ENCODE measurements at regions of chr2 and their contacts with region 1.

Region 1: DNA sequence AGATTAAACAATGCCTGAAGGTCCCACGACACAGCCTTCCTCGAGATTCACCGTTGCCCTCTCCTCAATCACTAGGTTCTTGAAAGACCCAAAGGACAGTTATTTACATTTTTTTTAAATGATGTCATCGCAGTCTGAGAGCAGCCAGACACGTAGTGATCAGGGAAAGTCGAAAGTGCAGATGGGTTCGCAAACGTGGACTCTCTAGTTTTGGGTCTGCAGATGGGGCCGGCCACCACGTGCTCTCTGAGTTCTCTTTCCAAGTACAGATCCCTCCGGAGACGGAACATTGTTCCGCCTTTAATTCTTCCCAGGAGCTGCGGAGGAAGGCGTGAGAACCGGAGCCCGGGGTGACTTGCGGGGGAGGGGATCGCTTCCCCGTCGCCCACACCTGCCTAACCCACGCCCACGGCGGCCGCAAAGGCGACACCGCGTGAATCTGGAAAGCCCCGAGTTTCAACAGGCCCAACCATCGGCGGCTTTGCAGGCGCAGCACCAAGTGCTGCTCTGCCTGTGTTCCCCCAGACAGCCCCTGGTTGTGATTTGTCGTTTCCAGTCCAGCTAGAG is 54.3 kb downstream of the PKDCC start:
- DNase-seq: peak; percentile 87 to 97 (median 94)
- ATAC-seq: peak; percentile 85
- H3K4me3 ChIP-seq: peak overlapping the region; percentile 44
- H3K4me3 Mint-ChIP-seq: peak overlapping the region in 8 of 10 donors; percentile 76 to 91 (median 85)
- H3K27ac ChIP-seq: peak overlapping the region; percentile 95
- H3K27ac Mint-ChIP-seq: peak overlapping the region in 2 of 9 donors; percentile 97 to 99
- H3K4me1 ChIP-seq: peaks cover 74 to 81% of the 10 kb centered on the region in 2 donors
- H3K4me1 Mint-ChIP-seq: peaks cover 37 to 69% (median 50%) of the 10 kb centered on the region in 7 donors
- H3K27me3 ChIP-seq: no peaks in the 10 kb centered on the region
- H3K27me3 Mint-ChIP-seq: no peaks in the 10 kb centered on the region

Region 2: DNA sequence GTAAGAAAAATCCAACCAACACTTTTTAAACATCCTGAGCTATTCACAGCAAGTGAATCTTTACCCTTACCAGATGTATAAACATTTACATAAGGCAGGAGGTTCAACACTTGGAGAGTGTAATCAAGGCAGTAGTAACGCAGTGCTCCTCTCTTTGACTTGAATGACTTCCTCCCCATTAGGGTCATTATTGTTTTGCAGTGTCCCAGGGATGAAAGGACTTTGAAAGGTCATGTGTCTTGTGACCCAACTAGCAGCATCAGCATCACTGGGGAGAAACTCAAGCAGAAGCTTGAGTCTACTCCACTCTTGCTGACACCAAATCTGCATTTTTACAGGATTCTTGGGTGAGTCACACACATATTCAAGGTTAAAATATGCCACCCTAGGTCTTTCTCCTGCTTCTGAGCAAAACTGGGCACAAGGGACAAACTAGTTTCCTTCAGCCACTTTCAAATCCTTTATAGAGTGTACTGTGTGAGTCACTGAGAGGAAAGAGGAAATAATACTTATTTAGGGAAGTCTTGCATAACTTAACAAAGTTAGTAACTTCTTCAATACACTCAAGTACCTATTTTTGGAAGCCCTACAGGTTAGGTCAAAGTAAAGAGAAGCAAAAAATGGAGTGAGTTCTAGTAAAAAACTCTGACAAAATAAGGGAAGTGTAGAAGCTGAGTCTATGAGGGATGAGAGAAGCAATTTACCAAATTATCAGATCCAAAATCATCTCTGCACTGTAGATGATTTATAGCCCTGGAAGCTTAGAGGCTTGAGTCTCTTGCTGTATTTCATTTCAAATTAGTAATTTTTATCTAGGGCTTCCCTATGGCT is 16.0 kb after region 1 on chr2:
- CTCF ChIA-PET with region 1: interaction called, 17 read pairs
- POLR2A ChIA-PET with region 1: interaction called, 636 read pairs
- intact Hi-C with region 1: loop called in 1 of 2 experiments (anchors 1 kb)
- DNase-seq: no peak
- ATAC-seq: peak; percentile 94
- H3K4me3 ChIP-seq: no peak overlapping the region
- H3K4me3 Mint-ChIP-seq: peak overlapping the region in 4 of 10 donors; percentile 15 to 60 (median 50)
- H3K27ac ChIP-seq: no peak overlapping the region
- H3K27ac Mint-ChIP-seq: peak overlapping the region; percentile 38 to 90 (median 64)
- H3K4me1 ChIP-seq: peaks cover 26 to 31% of the 10 kb centered on the region in 2 donors
- H3K4me1 Mint-ChIP-seq: peaks cover 30 to 72% (median 57%) of the 10 kb centered on the region in 7 donors
- H3K27me3 ChIP-seq: no peaks in the 10 kb centered on the region
- H3K27me3 Mint-ChIP-seq: peaks cover 0 to 2% (median 0%) of the 10 kb centered on the region in 5 donors

Region 3: DNA sequence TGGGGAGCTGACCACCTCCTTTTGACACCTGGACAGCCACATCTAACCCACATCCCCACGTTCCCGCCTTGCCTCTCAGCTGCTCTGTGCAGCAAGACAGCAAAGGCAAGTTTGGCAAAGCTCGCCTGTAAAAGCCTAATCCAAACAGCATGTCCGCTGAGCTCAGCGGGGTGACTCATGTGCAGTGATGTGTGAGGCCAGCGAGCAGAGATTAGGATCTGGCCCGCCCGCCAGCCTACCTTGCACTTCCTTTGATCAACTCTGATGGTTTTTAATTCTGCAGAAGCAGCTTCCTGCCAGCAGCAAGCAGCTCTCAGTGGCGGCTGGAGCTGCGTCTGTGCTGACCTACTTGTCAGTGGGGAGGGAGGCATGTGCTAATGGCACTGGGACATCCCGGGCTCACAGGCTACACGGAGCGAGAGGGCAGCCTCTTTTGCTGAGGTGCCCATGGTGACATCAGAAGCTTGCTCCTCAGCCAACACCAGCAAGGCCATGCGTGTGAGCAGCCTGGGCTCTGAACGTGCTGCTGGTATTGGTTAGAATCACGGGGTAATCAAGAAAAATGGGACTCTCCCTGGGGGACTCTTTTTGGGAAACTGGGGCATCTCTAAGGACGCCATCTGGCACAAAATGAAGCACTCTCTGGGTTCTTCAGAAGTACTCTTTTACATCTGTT is 31.0 kb after region 1 on chr2:
- CTCF ChIA-PET with region 1: interaction called, 19 read pairs
- POLR2A ChIA-PET with region 1: interaction called, 636 read pairs
- intact Hi-C with region 1: loop called (anchors 1 kb)
- DNase-seq: peak; percentile 53 to 92 (median 78)
- ATAC-seq: peak; percentile 94
- H3K4me3 ChIP-seq: peak overlapping the region; percentile 38
- H3K4me3 Mint-ChIP-seq: peak overlapping the region; percentile 66 to 86 (median 76)
- H3K27ac ChIP-seq: peak overlapping the region; percentile 82
- H3K27ac Mint-ChIP-seq: peak overlapping the region; percentile 68 to 98 (median 96)
- H3K4me1 ChIP-seq: peaks cover 81 to 89% of the 10 kb centered on the region in 2 donors
- H3K4me1 Mint-ChIP-seq: peaks cover 57 to 95% (median 93%) of the 10 kb centered on the region in 7 donors
- H3K27me3 ChIP-seq: no peaks in the 10 kb centered on the region
- H3K27me3 Mint-ChIP-seq: no peaks in the 10 kb centered on the region

Region 4: DNA sequence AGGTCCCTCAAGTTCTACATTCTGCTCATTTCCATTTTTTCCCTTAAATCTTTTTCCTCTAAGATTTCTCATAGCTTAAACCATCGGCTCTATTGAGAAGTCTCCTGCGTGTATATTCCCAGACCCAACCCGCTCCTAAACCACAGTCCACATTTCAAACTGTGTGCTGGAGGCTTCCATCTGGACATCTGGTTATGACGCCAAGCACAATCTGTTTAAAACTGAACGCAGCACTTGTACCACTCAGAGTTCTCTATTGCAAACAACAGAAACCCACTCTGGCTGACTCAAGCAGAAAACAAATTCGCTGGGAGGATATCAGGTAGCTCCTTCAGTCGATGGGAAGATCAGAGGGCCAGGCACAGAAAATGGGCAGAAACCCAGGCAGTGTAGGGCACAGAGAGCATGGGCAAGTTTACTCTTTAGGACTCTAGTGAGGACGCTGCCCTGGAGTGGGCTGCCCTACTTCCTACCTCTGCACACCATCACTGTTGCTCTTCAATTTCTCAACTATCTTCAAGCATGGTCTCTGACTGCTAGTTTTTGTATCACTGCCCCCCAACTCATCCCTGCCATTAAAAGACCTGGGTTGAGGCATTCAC is 61.4 kb after region 1 on chr2:
- CTCF ChIA-PET with region 1: interaction called, 4 read pairs
- POLR2A ChIA-PET with region 1: interaction called, 187 read pairs
- intact Hi-C with region 1: no loop called
- DNase-seq: no peak
- ATAC-seq: no peak
- H3K4me3 ChIP-seq: no peak overlapping the region
- H3K4me3 Mint-ChIP-seq: no peak overlapping the region
- H3K27ac ChIP-seq: no peak overlapping the region
- H3K27ac Mint-ChIP-seq: peak overlapping the region in 1 of 9 donors; percentile 73
- H3K4me1 ChIP-seq: no peaks in the 10 kb centered on the region
- H3K4me1 Mint-ChIP-seq: peaks cover 0 to 21% (median 5%) of the 10 kb centered on the region in 7 donors
- H3K27me3 ChIP-seq: no peaks in the 10 kb centered on the region
- H3K27me3 Mint-ChIP-seq: peaks cover 0 to 33% (median 0%) of the 10 kb centered on the region in 5 donors

Region 5: DNA sequence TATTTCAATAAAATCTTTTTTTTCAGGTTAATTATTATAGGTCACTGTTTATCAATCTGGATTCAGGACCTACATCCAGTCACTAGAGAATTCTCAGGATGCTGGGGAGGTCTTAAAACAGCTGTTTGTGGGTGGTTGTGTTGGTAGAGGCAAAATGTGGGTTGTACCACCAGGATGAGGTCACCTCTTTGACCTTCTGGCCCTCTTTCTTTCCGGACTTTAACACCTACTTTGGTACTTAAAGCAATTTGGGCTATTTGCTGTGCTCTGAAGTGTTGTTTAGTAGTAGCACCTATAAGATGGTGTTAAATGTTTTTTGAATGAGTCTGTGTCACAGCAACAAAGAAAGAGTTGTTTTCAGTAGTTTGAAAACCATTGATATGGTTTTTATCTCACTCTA is 81.7 kb after region 1 on chr2:
- CTCF ChIA-PET with region 1: interaction called, 9 read pairs
- POLR2A ChIA-PET with region 1: interaction called, 17 read pairs
- intact Hi-C with region 1: no loop called
- DNase-seq: no peak
- ATAC-seq: peak; percentile 57
- H3K4me3 ChIP-seq: no peak overlapping the region
- H3K4me3 Mint-ChIP-seq: peak overlapping the region in 1 of 10 donors; percentile 10
- H3K27ac ChIP-seq: no peak overlapping the region
- H3K27ac Mint-ChIP-seq: peak overlapping the region in 2 of 9 donors; percentile 21 to 64
- H3K4me1 ChIP-seq: peaks cover 54 to 56% of the 10 kb centered on the region in 2 donors
- H3K4me1 Mint-ChIP-seq: peaks cover 15 to 90% (median 64%) of the 10 kb centered on the region in 7 donors
- H3K27me3 ChIP-seq: no peaks in the 10 kb centered on the region
- H3K27me3 Mint-ChIP-seq: no peaks in the 10 kb centered on the region

Region 6: GRCh38 chr2:42314892-42315467 is 212.9 kb after region 1 on chr2:
- CTCF ChIA-PET with region 1: no interaction called
- POLR2A ChIA-PET with region 1: no interaction called
- intact Hi-C with region 1: loop called in 1 of 2 experiments (anchors 5 kb)
- DNase-seq: no peak
- ATAC-seq: no peak
- H3K4me3 ChIP-seq: no peak overlapping the region
- H3K4me3 Mint-ChIP-seq: no peak overlapping the region
- H3K27ac ChIP-seq: no peak overlapping the region
- H3K27ac Mint-ChIP-seq: peak overlapping the region in 8 of 9 donors; percentile 9 to 81 (median 70)
- H3K4me1 ChIP-seq: peaks cover 0 to 3% of the 10 kb centered on the region in 2 donors
- H3K4me1 Mint-ChIP-seq: peaks cover 7 to 37% (median 26%) of the 10 kb centered on the region in 7 donors
- H3K27me3 ChIP-seq: no peaks in the 10 kb centered on the region
- H3K27me3 Mint-ChIP-seq: no peaks in the 10 kb centered on the region

Region 7: DNA sequence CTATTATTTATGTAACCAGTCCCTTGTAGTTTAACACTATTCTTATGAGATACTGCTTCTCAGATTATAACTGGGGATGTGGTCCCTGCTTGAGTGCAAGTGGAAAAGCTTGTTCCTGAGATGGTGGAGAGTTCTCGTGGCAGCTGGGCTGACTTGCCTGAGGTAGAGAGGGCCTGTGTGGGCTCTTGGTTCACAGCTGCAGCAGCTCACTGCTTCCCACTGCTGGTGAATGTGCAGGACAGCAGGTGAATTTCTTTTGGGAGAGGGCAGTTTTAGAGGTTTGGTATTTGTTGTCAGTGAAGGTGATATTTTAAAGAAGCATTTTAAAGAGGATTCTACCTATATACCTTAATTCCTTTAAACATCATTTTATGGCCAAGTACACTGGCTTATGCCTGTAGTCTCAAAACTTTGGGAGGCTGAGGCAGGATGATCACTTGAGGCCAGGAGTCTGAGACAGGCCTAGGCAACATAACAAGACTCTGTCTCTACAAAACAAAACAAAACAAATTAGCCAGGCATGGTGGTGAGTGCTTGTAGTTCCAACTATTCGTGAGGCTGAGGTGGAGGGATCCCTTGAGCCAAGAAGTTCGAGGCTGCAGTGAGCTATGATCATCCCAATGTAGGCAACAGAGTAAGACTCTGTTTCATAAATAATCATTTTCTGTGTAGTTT is 561.1 kb after region 1 on chr2:
- CTCF ChIA-PET with region 1: interaction called, 3 read pairs
- POLR2A ChIA-PET with region 1: no interaction called
- intact Hi-C with region 1: loop called (anchors 5 to 10 kb)
- DNase-seq: peak; percentile 26 to 85 (median 75)
- ATAC-seq: peak; percentile 96
- H3K4me3 ChIP-seq: no peak overlapping the region
- H3K4me3 Mint-ChIP-seq: peak overlapping the region in 7 of 10 donors; percentile 31 to 69 (median 53)
- H3K27ac ChIP-seq: peak overlapping the region; percentile 43
- H3K27ac Mint-ChIP-seq: peak overlapping the region in 8 of 9 donors; percentile 29 to 95 (median 83)
- H3K4me1 ChIP-seq: peaks cover 0 to 5% of the 10 kb centered on the region in 2 donors
- H3K4me1 Mint-ChIP-seq: peaks cover 8 to 60% (median 25%) of the 10 kb centered on the region in 7 donors
- H3K27me3 ChIP-seq: no peaks in the 10 kb centered on the region
- H3K27me3 Mint-ChIP-seq: no peaks in the 10 kb centered on the region